HepG2 (cell line): ENCODE measurements at regions of chr11 and their contacts with region 1.

Region 1: GRCh38 chr11:81644239-81644840 is 1089.3 kb downstream of the FAM181B start:
- DNase-seq: peak; percentile 60
- ATAC-seq: peak; percentile 93
- H3K4me3 ChIP-seq: no peak overlapping the region
- H3K27ac ChIP-seq: no peak overlapping the region
- H3K4me1 ChIP-seq: no peaks in the 10 kb centered on the region
- H3K27me3 ChIP-seq: no peaks in the 10 kb centered on the region
- CTCF ChIP-seq: peak; percentile 67
- EP300 ChIP-seq: no peak
- POLR2A ChIP-seq: no peak
- RAD21 ChIP-seq: peak; percentile 20; the same call in 1 of the 2 replicates

Region 2: DNA sequence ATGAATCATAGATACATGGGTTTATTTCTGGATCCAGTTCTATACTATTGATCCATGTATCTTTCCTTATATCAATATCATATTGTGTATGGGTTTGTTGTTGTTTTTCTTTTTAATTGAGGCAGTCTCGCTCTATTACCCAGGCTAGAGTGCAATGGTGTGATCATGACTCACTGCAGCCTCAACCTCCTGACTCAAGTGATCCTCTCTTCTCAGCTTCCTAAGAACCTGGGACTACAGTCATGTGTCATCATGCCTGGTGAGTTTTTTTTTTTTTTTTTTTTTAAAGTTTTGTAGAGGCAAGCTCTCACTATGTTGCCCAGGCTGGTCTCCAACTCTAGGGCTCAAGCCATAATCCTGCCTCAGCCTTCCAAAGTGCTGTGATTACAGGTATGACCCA is 614.2 kb before region 1 on chr11:
- CTCF ChIA-PET with region 1: no interaction called
- POLR2A ChIA-PET with region 1: no interaction called
- in situ Hi-C with region 1: no loop called
- intact Hi-C with region 1: no loop called
- DNase-seq: no peak
- ATAC-seq: no peak
- H3K4me3 ChIP-seq: no peak overlapping the region
- H3K27ac ChIP-seq: no peak overlapping the region
- H3K4me1 ChIP-seq: no peaks in the 10 kb centered on the region
- H3K27me3 ChIP-seq: no peaks in the 10 kb centered on the region
- CTCF ChIP-seq: no peak
- EP300 ChIP-seq: no peak
- POLR2A ChIP-seq: no peak
- RAD21 ChIP-seq: no peak

Region 3: DNA sequence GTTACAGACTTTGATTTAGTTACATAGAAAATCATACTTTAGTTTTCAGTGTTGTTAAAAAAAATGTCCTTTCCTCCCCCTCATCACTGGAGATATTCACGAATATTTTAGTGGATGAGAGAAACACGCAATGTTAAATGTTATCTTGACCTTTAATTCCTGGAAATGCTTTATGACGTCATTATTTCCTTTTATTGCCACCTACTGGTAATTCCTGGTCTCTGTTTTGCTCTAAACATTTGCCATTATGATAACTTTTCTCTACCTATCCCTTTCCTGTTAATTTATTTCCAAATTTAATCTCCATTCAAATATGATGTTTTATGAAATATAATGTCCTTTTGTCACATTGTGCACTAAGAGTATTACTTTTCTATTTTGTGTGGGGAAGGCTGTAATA is 318.7 kb after region 1 on chr11:
- CTCF ChIA-PET with region 1: no interaction called
- POLR2A ChIA-PET with region 1: no interaction called
- in situ Hi-C with region 1: no loop called
- intact Hi-C with region 1: no loop called
- DNase-seq: peak; percentile 2
- ATAC-seq: no peak
- H3K4me3 ChIP-seq: no peak overlapping the region
- H3K27ac ChIP-seq: no peak overlapping the region
- H3K4me1 ChIP-seq: no peaks in the 10 kb centered on the region
- H3K27me3 ChIP-seq: no peaks in the 10 kb centered on the region
- CTCF ChIP-seq: 0 out of 2 replicates have a peak, but pooled peaks have one; percentile 11
- EP300 ChIP-seq: no peak
- POLR2A ChIP-seq: no peak
- RAD21 ChIP-seq: no peak

Region 4: GRCh38 chr11:82229341-82229740 is 585.0 kb after region 1 on chr11:
- CTCF ChIA-PET with region 1: interaction called, 17 read pairs
- POLR2A ChIA-PET with region 1: no interaction called
- in situ Hi-C with region 1: loop called (anchors 5 kb)
- intact Hi-C with region 1: loop called (anchors 1 kb)
- DNase-seq: peak; percentile 12
- ATAC-seq: peak; percentile 68
- H3K4me3 ChIP-seq: no peak overlapping the region
- H3K27ac ChIP-seq: no peak overlapping the region
- H3K4me1 ChIP-seq: no peaks in the 10 kb centered on the region
- H3K27me3 ChIP-seq: no peaks in the 10 kb centered on the region
- CTCF ChIP-seq: peak; percentile 38
- EP300 ChIP-seq: no peak
- POLR2A ChIP-seq: no peak
- RAD21 ChIP-seq: no peak

Region 5: GRCh38 chr11:82682003-82682751 is 1037.8 kb after region 1 on chr11:
- CTCF ChIA-PET with region 1: no interaction called
- POLR2A ChIA-PET with region 1: no interaction called
- in situ Hi-C with region 1: loop called (anchors 25 kb)
- intact Hi-C with region 1: no loop called
- DNase-seq: peak; percentile 67
- ATAC-seq: peak; percentile 96
- H3K4me3 ChIP-seq: no peak overlapping the region
- H3K27ac ChIP-seq: no peak overlapping the region
- H3K4me1 ChIP-seq: no peaks in the 10 kb centered on the region
- H3K27me3 ChIP-seq: no peaks in the 10 kb centered on the region
- CTCF ChIP-seq: peak; percentile 82
- EP300 ChIP-seq: no peak
- POLR2A ChIP-seq: no peak
- RAD21 ChIP-seq: peak; percentile 46; the same call in 1 of the 2 replicates